ENCODE measurements at regions of chr21 and their contacts with region 1.

Region 1: DNA sequence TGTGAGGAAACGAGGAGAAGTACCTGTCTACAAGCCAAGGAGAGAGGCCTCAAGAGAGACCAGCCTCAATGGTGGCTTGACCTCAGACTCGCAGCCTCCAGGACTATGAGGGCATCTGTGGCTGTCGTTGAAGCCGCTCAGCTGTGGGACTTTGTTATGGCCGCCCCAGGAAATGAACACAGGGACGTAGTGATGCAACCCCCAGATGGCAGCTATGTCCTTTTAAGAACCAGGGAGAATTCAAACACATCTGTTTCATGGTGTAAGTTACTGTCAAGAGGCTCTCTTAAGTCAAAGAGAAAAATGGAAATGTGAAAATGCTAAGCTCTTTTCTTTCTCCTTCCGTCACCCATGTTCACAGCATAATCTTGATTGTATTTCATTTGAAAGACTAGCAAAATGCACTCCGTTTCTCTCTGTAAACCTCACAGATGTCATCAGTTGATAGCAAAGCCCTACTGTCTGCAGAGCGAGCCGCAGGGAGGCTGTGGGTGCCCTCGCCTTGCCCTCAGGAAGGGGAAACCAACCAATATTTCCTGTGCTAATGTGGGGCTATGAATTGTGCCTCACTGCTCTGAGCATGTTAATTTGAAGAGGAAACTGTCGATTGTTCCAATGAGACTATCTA is 21.3 kb downstream of the UBASH3A start:
- DNase-seq: peak; percentile 93
- ATAC-seq: peak; percentile 70
- H3K4me3 Mint-ChIP-seq: peak overlapping the region; percentile 52
- H3K27ac Mint-ChIP-seq: peak overlapping the region; percentile 93
- H3K4me1 Mint-ChIP-seq: peaks cover 72% of the 10 kb centered on the region
- H3K27me3 Mint-ChIP-seq: no peaks in the 10 kb centered on the region

Region 2: DNA sequence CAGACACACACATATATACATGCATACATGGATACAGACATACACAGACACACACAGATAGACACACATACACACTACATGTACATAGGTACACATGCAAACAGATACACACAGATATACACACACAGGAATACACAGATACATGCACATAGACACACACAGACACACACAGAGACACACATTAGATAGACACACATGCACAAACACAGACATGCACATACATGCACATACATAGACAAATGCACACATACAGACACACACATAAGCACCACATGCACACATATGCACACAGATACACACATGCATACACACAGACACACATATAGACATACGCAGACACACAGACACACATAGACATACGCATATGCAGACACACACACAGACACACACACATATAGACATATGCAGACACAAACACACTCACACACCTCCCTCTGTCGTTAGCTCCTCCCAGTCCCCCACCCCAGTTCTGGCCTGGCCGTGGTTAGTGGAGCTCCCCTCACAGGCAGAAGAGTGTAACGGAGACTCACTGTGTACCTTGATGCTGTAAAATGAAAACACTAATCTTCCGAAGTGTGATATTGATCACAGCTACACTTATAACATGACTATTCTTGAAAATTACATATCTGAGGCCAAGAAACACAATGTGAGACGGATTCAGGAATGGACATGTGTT is 13.7 kb before region 1 on chr21:
- CTCF ChIA-PET with region 1: interaction called, 41 read pairs
- DNase-seq: peak; percentile 67
- ATAC-seq: no peak
- H3K4me3 Mint-ChIP-seq: no peak overlapping the region
- H3K27ac Mint-ChIP-seq: no peak overlapping the region
- H3K4me1 Mint-ChIP-seq: peaks cover 35% of the 10 kb centered on the region
- H3K27me3 Mint-ChIP-seq: no peaks in the 10 kb centered on the region